H1 (cell line): ENCODE measurements at regions of chr17 and their contacts with region 1.

Region 1: GRCh38 chr17:5309851-5310250 is 27.8 kb downstream of the RABEP1 start:
- DNase-seq: no peak
- H3K4me3 ChIP-seq: no peak overlapping the region
- H3K27ac ChIP-seq: no peak overlapping the region
- H3K4me1 ChIP-seq: no peaks in the 10 kb centered on the region
- H3K27me3 ChIP-seq: no peaks in the 10 kb centered on the region
- CTCF ChIP-seq: no peak
- EP300 ChIP-seq: no peak
- POLR2A ChIP-seq: no peak
- RAD21 ChIP-seq: no peak

Region 2: DNA sequence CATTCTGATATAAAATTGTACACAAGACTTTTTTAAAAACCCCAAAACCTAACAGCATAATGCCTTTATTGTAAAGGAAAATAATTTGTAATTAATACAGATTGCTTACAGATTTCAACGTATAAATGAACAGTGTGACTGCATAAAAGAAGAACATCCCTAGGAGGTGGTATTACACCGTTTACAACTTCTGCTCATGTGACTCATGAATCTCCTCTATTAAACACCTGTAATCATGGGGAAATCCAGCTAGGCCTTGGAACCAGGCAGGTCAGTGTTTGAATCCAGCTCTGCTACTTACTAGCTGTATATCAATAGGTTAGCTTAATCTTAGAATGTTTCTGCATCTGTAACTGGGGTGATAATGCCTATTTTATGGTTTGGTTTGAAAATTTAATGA is 12.6 kb before region 1 on chr17:
- CTCF ChIA-PET with region 1: interaction called, 49 read pairs
- POLR2A ChIA-PET with region 1: no interaction called
- DNase-seq: no peak
- H3K4me3 ChIP-seq: no peak overlapping the region
- H3K27ac ChIP-seq: no peak overlapping the region
- H3K4me1 ChIP-seq: no peaks in the 10 kb centered on the region
- H3K27me3 ChIP-seq: no peaks in the 10 kb centered on the region
- CTCF ChIP-seq: no peak
- EP300 ChIP-seq: no peak
- POLR2A ChIP-seq: no peak
- RAD21 ChIP-seq: no peak

Region 3: GRCh38 chr17:5396612-5397011 is 86.8 kb after region 1 on chr17:
- CTCF ChIA-PET with region 1: no interaction called
- POLR2A ChIA-PET with region 1: no interaction called
- DNase-seq: no peak
- H3K4me3 ChIP-seq: no peak overlapping the region
- H3K27ac ChIP-seq: no peak overlapping the region
- H3K4me1 ChIP-seq: no peaks in the 10 kb centered on the region
- H3K27me3 ChIP-seq: peaks cover 0 to 2% (median 0%) of the 10 kb centered on the region in 4 experiments; a peak in 1 of 7 replicates
- CTCF ChIP-seq: no peak
- EP300 ChIP-seq: no peak
- POLR2A ChIP-seq: no peak
- RAD21 ChIP-seq: no peak

Region 4: DNA sequence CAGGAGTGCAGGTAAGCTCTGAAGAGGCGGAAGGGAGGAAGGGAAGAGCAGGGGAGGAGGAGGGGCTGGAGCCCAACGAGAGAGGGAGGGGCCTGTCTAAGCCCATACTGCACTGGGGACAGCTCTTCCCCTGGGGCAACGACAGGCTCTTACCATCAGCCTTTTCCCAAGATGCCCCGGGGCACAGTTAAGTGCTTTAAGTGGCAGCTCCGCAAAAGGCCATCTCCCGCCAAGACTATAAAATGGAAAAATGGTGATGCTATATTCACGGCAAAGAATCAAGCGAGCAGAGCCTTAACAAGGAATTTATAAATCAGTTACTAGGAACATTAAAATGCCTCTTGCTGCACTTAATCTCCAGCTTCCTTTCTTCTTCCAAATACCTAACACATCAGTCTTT is 384.7 kb after region 1 on chr17:
- CTCF ChIA-PET with region 1: no interaction called
- POLR2A ChIA-PET with region 1: no interaction called
- DNase-seq: peak in 1 of 2 experiments; percentile 57
- H3K4me3 ChIP-seq: no peak overlapping the region
- H3K27ac ChIP-seq: no peak overlapping the region
- H3K4me1 ChIP-seq: peaks cover 4 to 8% (median 6%) of the 10 kb centered on the region in 4 experiments
- H3K27me3 ChIP-seq: no peaks in the 10 kb centered on the region
- CTCF ChIP-seq: no peak
- EP300 ChIP-seq: no peak
- POLR2A ChIP-seq: no peak
- RAD21 ChIP-seq: no peak